WTC11 (cell line): ENCODE measurements at regions of chr12 and their contacts with region 1.

Region 1: DNA sequence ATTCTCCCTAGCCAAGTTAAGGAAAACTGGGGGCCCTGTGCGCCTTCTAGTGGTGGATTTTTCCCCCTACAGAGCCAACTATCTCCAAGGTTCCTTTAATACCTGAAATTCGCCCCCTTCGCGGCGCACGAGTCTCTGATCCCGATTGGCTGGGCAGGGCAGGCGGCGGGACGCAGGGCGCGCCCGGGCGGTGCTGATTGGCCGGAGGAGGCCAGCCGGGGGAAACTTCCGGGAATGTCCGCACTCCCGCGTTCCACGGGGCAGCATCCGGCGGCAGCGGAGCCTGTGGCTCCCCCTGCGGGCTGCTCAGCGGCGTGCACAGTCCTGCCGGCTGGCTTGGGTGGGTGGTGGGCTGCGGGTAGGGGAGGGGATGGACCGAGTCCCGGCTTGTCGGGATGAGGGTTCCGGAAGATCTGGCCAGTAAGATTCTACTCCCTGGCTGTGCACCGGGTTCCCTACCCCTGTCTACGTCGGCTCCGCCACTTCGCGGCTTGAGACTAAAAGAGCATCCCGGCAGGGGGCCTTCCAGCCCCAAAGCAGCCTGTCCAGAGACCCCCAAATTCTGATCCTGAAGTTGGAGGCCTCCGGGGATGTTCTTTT is at the start of gene NABP2:
- DNase-seq: peak; percentile 99
- ATAC-seq: peak; percentile 78
- H3K4me3 Mint-ChIP-seq: peak within 1 kb of the TSS; percentile 98
- H3K27ac Mint-ChIP-seq: peak within 1 kb of the TSS; percentile 97
- H3K4me1 Mint-ChIP-seq: peaks cover 33% of the 10 kb centered on the region
- H3K27me3 Mint-ChIP-seq: no peaks in the 10 kb centered on the region
- CTCF ChIP-seq: peak; percentile 54; the same call in 1 of the 2 replicates
- total RNA-seq, gene NABP2: 42.7 to 47.9 TPM (median 47.5 TPM) in 3 replicates

Region 2: GRCh38 chr12:56117778-56118687 is 106.2 kb before region 1 on chr12 and contains the start of gene ZC3H10:
- CTCF ChIA-PET with region 1: interaction called, 27 read pairs
- POLR2A ChIA-PET with region 1: interaction called, 18 read pairs
- DNase-seq: peak; percentile 98
- ATAC-seq: peak; percentile 75
- H3K4me3 Mint-ChIP-seq: peak within 1 kb of the TSS; percentile 100
- H3K27ac Mint-ChIP-seq: peak within 1 kb of the TSS; percentile 100
- H3K4me1 Mint-ChIP-seq: peaks cover 21% of the 10 kb centered on the region
- H3K27me3 Mint-ChIP-seq: no peaks in the 10 kb centered on the region
- CTCF ChIP-seq: no peak
- total RNA-seq, gene ZC3H10: 11.3 to 13.6 TPM (median 13.1 TPM) in 3 replicates

Region 3: DNA sequence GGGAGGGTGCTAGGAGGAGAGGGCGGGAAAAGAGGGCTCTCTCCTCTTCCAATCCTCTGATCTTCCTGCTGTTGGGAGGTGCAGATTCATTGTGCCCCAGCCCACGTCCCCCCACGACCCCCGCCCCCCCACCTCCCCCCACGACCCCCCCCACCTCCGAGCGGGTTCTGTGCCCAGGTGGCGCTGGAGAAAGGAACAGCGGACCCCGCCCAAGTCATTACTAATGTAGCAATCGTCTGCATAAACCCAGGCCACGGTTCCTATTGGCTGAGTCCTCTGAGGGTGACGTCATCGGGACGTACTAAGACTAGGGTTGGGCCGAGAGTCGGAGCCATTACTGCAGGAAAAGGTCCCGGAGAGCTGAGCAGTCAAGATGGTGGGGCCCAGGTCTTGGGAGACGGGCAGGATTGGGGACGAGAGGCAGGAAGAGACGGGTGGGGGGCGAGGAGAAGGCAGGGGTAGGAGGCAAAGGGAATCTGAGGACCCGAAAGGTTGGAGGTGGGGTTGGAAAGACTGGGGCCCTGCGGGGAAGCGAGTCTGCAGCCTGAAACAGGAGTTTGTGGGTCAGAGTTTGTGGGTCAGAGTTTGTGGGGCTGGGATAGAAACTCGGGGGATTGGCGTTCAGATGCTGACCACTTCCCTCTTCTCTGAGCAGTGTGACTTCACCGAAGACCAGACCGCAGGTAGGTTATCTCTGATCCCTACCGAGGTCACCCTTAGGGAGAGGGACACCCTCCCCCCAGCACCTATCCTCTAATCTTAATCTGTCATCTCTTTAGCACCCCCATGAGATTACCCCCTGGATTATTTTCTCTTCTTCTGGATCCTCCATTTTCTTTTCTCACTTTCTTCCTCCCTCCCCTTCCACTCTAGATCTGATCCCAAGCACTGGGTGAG is 65.9 kb before region 1 on chr12 and contains the start of gene MYL6:
- CTCF ChIA-PET with region 1: interaction called, 5 read pairs
- POLR2A ChIA-PET with region 1: interaction called, 33 read pairs
- DNase-seq: peak; percentile 93
- ATAC-seq: peak; percentile 65
- H3K4me3 Mint-ChIP-seq: peak within 1 kb of the TSS; percentile 96
- H3K27ac Mint-ChIP-seq: peak within 1 kb of the TSS; percentile 99
- H3K4me1 Mint-ChIP-seq: peaks cover 49% of the 10 kb centered on the region
- H3K27me3 Mint-ChIP-seq: no peaks in the 10 kb centered on the region
- CTCF ChIP-seq: no peak; the same call in 1 of the 2 replicates
- total RNA-seq, gene MYL6: 835 to 932 TPM (median 844 TPM) in 3 replicates

Region 4: GRCh38 chr12:56206457-56207166 is 17.6 kb before region 1 on chr12:
- CTCF ChIA-PET with region 1: interaction called, 102 read pairs
- POLR2A ChIA-PET with region 1: interaction called, 13 read pairs
- DNase-seq: peak; percentile 83
- ATAC-seq: peak; percentile 96
- H3K4me3 Mint-ChIP-seq: no peak overlapping the region
- H3K27ac Mint-ChIP-seq: peak overlapping the region; percentile 90
- H3K4me1 Mint-ChIP-seq: no peaks in the 10 kb centered on the region
- H3K27me3 Mint-ChIP-seq: no peaks in the 10 kb centered on the region
- CTCF ChIP-seq: no peak; the same call in 1 of the 2 replicates

Region 5: DNA sequence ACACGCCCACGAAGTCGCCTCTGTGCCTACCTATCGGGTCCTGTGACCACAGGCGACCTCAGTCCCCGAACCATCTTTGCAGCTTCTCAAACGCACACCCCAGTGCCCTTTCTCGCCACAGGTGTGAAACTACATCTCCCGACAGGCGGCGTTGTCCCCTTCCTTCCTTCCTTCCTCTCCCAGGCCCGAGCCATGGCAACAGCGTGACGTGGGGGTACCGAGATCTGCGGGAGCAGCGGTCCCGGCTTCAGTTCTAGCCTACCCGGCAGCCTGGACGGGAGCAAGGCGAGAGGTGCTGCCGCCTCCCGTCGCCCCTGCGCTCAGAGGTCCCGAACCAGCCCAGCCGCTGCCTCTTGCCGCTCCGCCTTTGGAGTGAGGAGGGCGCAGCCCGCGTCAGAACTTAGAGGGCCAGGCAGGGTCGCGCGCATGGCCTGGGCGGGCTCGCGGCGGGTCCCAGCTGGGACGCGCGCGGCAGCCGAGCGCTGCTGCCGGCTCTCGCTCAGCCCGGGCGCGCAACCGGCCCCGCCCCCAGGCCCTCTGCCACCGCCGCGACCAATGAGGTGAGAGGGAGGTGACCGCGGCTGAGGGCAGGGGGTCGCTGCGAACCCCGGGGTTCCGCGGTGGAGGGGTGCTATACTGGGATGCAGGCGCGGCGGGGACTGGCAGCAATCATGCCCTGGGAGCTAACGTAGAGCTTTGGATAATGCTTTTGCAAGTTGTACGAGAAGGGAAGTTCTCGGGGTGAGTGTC is 42.7 kb after region 1 on chr12 and contains the start of gene COQ10A:
- CTCF ChIA-PET with region 1: interaction called, 31 read pairs
- POLR2A ChIA-PET with region 1: interaction called, 12 read pairs
- DNase-seq: peak; percentile 92
- ATAC-seq: peak; percentile 87
- H3K4me3 Mint-ChIP-seq: peak within 1 kb of the TSS; percentile 84
- H3K27ac Mint-ChIP-seq: peak within 1 kb of the TSS; percentile 97
- H3K4me1 Mint-ChIP-seq: peaks cover 14% of the 10 kb centered on the region
- H3K27me3 Mint-ChIP-seq: no peaks in the 10 kb centered on the region
- CTCF ChIP-seq: no peak
- total RNA-seq, gene COQ10A: 22.7 to 26.2 TPM (median 24.4 TPM) in 3 replicates

Region 6: GRCh38 chr12:56359851-56360767 is 135.9 kb after region 1 on chr12 and contains the start of gene STAT2:
- CTCF ChIA-PET with region 1: interaction called, 6 read pairs
- POLR2A ChIA-PET with region 1: interaction called, 15 read pairs
- DNase-seq: peak; percentile 100
- ATAC-seq: peak; percentile 98
- H3K4me3 Mint-ChIP-seq: peak within 1 kb of the TSS; percentile 90
- H3K27ac Mint-ChIP-seq: peak within 1 kb of the TSS; percentile 99
- H3K4me1 Mint-ChIP-seq: peaks cover 13% of the 10 kb centered on the region
- H3K27me3 Mint-ChIP-seq: peaks cover 9% of the 10 kb centered on the region; the same call in 1 of the 2 replicates
- CTCF ChIP-seq: no peak
- total RNA-seq, gene STAT2: 53.2 to 54.5 TPM (median 54.5 TPM) in 3 replicates